WTC11 (cell line): ENCODE measurements at regions of chr15 and their contacts with region 1.

Region 1: GRCh38 chr15:57306161-57306943 is 70.0 kb upstream of the CGNL1 start:
- DNase-seq: peak; percentile 98
- ATAC-seq: peak; percentile 88
- H3K4me3 Mint-ChIP-seq: peak overlapping the region; percentile 75
- H3K27ac Mint-ChIP-seq: peak overlapping the region; percentile 88
- H3K4me1 Mint-ChIP-seq: peaks cover 30% of the 10 kb centered on the region
- H3K27me3 Mint-ChIP-seq: no peaks in the 10 kb centered on the region; the same call in 1 of the 2 replicates
- CTCF ChIP-seq: peak; percentile 88

Region 2: DNA sequence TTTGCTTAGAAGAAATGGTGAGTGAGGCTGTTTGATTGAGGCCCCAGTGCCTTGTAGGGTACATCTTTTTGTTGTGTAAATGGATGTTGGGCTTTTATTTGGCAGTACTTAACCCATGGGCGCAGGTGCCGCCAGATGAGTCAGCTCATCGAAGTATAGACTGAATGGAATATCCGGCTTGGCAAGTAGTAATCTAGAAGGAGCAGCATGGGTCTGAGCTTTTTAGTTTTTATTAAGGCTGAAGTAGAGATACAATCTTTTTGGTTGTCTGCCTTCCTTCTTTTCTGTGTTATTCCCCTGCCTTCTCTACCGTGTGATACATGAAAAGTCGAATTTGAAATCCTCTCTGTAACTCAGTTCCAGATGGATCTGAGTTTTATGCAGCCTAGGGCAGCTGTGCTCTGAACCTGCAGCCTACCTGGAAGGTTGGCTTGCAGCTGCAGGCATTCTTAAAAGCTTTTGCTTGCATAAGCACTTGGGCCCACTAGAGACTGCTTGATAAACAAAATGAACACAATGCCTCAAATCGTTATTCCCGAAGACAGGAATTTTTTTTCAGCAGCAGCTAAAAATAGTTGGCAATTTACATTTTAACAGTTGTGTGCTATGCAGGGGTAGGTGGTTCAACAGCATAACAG is 107.6 kb before region 1 on chr15:
- CTCF ChIA-PET with region 1: interaction called, 17 read pairs
- POLR2A ChIA-PET with region 1: no interaction called
- DNase-seq: peak; percentile 65
- ATAC-seq: peak; percentile 95
- H3K4me3 Mint-ChIP-seq: peak overlapping the region; percentile 54
- H3K27ac Mint-ChIP-seq: peak overlapping the region; percentile 100
- H3K4me1 Mint-ChIP-seq: peaks cover 77% of the 10 kb centered on the region
- H3K27me3 Mint-ChIP-seq: no peaks in the 10 kb centered on the region
- CTCF ChIP-seq: no peak

Region 3: DNA sequence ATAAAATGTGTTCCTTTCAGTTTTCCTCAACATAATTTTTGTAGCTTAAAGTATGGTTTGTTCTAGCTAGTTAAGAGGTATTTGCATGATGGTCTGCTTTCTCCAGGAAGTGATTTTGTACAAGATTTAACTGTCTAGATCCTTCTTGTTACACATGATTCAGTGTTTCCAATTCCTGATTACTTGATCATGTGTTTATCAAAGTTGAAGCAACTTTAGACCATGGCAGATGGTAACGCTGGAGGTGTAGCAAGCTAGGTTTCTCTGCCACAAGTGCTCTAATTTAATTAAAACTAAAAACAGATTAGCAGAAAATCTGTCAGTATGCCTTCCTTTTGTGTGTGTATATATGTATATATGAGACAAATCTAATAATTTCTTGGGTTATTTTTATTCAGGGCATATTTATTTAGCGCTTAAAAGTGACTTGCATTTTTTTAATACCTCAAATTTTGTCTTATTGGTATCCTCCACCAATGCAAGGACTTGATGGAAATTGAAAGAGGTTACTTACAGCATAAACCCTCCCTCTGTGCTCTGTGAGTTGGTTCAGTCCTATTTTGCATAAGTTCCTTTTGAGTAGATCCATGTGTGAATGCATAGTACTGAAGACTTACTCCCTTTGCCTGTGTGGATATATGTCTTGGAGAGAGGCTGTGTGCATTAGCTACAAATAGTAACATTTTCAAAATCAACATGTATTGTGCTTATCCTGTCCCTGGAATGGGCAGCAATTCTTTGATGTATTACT is 87.4 kb before region 1 on chr15:
- CTCF ChIA-PET with region 1: interaction called, 10 read pairs
- POLR2A ChIA-PET with region 1: no interaction called
- DNase-seq: no peak
- ATAC-seq: peak; percentile 94
- H3K4me3 Mint-ChIP-seq: peak overlapping the region; percentile 69
- H3K27ac Mint-ChIP-seq: peak overlapping the region; percentile 87
- H3K4me1 Mint-ChIP-seq: peaks cover 83% of the 10 kb centered on the region
- H3K27me3 Mint-ChIP-seq: no peaks in the 10 kb centered on the region
- CTCF ChIP-seq: no peak

Region 4: DNA sequence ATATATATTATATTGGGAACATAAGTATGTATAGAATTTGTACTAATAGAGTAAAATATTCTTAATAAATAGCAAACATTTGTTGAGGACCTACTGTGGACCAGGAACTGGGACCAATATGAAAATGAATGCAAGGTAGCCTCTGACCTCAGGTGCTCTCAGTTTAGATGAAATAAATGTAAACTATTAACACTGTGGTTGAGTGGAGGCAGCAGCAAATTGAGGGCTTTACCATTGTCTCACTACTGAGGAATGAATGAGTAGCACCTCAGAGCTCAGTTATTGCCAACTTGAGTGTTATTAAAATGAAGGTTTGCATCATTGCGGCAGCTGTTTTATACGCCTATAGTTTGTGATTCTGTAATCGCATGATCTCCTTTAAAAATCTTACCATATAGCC is 21.0 kb before region 1 on chr15:
- CTCF ChIA-PET with region 1: interaction called, 13 read pairs
- POLR2A ChIA-PET with region 1: no interaction called
- DNase-seq: no peak
- ATAC-seq: no peak
- H3K4me3 Mint-ChIP-seq: no peak overlapping the region
- H3K27ac Mint-ChIP-seq: no peak overlapping the region
- H3K4me1 Mint-ChIP-seq: peaks cover 25% of the 10 kb centered on the region
- H3K27me3 Mint-ChIP-seq: no peaks in the 10 kb centered on the region
- CTCF ChIP-seq: no peak

Region 5: DNA sequence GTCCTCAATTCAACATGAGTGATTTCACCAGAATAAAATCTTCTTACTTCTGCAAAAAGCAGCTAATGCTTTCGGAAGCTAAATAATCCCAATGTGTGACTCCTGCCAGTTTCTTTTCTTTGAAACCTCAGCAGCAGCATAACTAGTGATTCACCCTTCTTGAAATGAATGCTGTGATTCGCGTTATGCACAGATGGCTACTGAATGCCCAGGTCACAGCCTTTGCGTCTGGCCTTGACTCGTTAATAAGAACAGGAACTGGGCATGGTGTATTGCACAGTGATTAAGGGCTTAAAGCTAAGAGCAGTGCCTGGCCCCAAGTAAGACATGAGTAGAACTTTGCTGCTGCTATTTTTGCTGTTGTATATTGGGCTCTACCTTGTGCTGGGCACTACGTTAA is 88.9 kb after region 1 on chr15:
- CTCF ChIA-PET with region 1: no interaction called
- POLR2A ChIA-PET with region 1: no interaction called
- DNase-seq: no peak
- ATAC-seq: no peak
- H3K4me3 Mint-ChIP-seq: no peak overlapping the region
- H3K27ac Mint-ChIP-seq: peak overlapping the region; percentile 7; the same call in 1 of the 2 replicates
- H3K4me1 Mint-ChIP-seq: peaks cover 46% of the 10 kb centered on the region
- H3K27me3 Mint-ChIP-seq: no peaks in the 10 kb centered on the region
- CTCF ChIP-seq: no peak

Region 6: DNA sequence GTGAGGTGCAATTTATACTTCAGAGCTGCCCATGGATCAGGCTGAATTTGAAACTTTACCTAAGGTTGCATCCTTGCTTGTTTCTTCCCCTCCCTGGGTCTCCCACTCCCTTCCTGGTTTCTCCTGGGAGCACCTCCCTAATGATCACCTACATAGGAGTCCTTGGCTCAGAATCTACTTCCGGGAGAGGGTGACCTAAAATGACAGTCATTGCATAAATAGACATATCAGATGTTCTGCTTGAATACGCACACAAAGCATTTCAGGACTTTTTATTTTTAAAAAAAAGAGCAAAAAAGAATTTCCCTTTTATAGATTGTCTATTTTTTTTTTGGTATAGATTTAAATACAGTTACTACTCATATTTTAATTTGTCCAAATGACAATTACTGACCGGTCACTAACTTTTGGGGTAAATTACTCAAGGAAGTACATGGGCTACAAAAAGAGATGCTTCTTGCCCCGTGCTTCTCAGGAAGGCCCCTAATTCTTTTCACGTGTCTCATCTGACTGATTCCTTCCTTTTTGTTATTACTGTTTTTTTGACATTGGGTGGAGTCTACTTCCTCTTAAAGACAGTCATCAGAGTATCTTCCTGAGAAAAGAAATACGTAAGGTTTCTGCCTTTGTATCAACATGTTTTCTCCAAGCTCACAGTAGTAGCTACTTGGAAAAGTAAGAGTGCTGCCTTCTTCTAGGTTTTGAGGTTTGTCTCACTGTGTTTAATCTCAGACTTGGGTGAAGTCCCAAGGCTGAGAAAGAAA is 280.5 kb after region 1 on chr15:
- CTCF ChIA-PET with region 1: no interaction called
- POLR2A ChIA-PET with region 1: no interaction called
- DNase-seq: no peak
- ATAC-seq: no peak
- H3K4me3 Mint-ChIP-seq: no peak overlapping the region
- H3K27ac Mint-ChIP-seq: no peak overlapping the region
- H3K4me1 Mint-ChIP-seq: peaks cover 5% of the 10 kb centered on the region
- H3K27me3 Mint-ChIP-seq: peaks cover 24% of the 10 kb centered on the region
- CTCF ChIP-seq: no peak